ENCODE measurements at regions of chr9 and their contacts with region 1.

Region 1: GRCh38 chr9:15211160-15211814 is 95.7 kb downstream of the TTC39B start:
- DNase-seq: peak; percentile 58
- H3K4me3 Mint-ChIP-seq: no peak overlapping the region
- H3K27ac Mint-ChIP-seq: no peak overlapping the region
- H3K4me1 Mint-ChIP-seq: peaks cover 8% of the 10 kb centered on the region
- H3K27me3 Mint-ChIP-seq: no peaks in the 10 kb centered on the region

Region 2: GRCh38 chr9:14652729-14653377 is 558.4 kb before region 1 on chr9:
- CTCF ChIA-PET with region 1: no interaction called
- POLR2A ChIA-PET with region 1: no interaction called
- intact Hi-C with region 1: no loop called
- DNase-seq: no peak
- H3K4me3 Mint-ChIP-seq: no peak overlapping the region
- H3K27ac Mint-ChIP-seq: no peak overlapping the region
- H3K4me1 Mint-ChIP-seq: no peaks in the 10 kb centered on the region
- H3K27me3 Mint-ChIP-seq: no peaks in the 10 kb centered on the region

Region 3: GRCh38 chr9:15306757-15307534 is 95.7 kb after region 1 on chr9 and contains the start of gene TTC39B:
- CTCF ChIA-PET with region 1: interaction called, 12 read pairs
- POLR2A ChIA-PET with region 1: interaction called, 3 read pairs
- intact Hi-C with region 1: loop called (anchors 1 kb)
- DNase-seq: peak; percentile 89
- H3K4me3 Mint-ChIP-seq: peak within 1 kb of the TSS; percentile 99
- H3K27ac Mint-ChIP-seq: peak within 1 kb of the TSS; percentile 96
- H3K4me1 Mint-ChIP-seq: peaks cover 48% of the 10 kb centered on the region
- H3K27me3 Mint-ChIP-seq: no peaks in the 10 kb centered on the region
- total RNA-seq, gene TTC39B: 30.3 to 31.7 TPM

Region 4: GRCh38 chr9:15357050-15357653 is 145.9 kb after region 1 on chr9:
- CTCF ChIA-PET with region 1: no interaction called
- POLR2A ChIA-PET with region 1: no interaction called
- intact Hi-C with region 1: loop called (anchors 5 kb)
- DNase-seq: peak; percentile 16
- H3K4me3 Mint-ChIP-seq: no peak overlapping the region
- H3K27ac Mint-ChIP-seq: no peak overlapping the region
- H3K4me1 Mint-ChIP-seq: peaks cover 8% of the 10 kb centered on the region
- H3K27me3 Mint-ChIP-seq: no peaks in the 10 kb centered on the region

Region 5: GRCh38 chr9:15416880-15417279 is 205.6 kb after region 1 on chr9:
- CTCF ChIA-PET with region 1: interaction called, 20 read pairs
- POLR2A ChIA-PET with region 1: no interaction called
- intact Hi-C with region 1: loop called (anchors 1 kb)
- DNase-seq: peak; percentile 48
- H3K4me3 Mint-ChIP-seq: no peak overlapping the region
- H3K27ac Mint-ChIP-seq: no peak overlapping the region
- H3K4me1 Mint-ChIP-seq: no peaks in the 10 kb centered on the region
- H3K27me3 Mint-ChIP-seq: no peaks in the 10 kb centered on the region

Region 6: DNA sequence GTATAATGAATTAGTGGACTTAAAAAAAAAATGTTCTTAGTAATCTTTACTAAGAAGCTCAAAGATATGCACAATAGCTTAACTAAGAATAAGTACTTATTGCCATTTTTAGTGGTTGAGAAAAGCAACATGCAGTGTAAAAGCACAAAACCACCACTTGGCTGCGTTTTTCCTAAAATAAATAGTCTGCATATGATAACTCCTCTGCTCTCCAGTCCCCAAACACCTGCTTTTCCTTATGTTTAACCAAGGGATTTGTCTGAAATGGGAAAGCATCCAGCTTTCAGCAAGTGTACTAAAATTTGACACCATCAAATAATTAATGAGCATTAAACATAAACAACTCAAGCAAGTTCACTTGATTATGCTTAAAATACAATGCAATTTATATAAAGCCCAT is 258.1 kb after region 1 on chr9:
- CTCF ChIA-PET with region 1: no interaction called
- POLR2A ChIA-PET with region 1: no interaction called
- intact Hi-C with region 1: no loop called
- DNase-seq: no peak
- H3K4me3 Mint-ChIP-seq: no peak overlapping the region
- H3K27ac Mint-ChIP-seq: no peak overlapping the region
- H3K4me1 Mint-ChIP-seq: peaks cover 17% of the 10 kb centered on the region
- H3K27me3 Mint-ChIP-seq: no peaks in the 10 kb centered on the region

Region 7: GRCh38 chr9:15529566-15530324 is 318.5 kb after region 1 on chr9:
- CTCF ChIA-PET with region 1: interaction called, 4 read pairs
- POLR2A ChIA-PET with region 1: no interaction called
- intact Hi-C with region 1: loop called (anchors 1 kb)
- DNase-seq: no peak
- H3K4me3 Mint-ChIP-seq: no peak overlapping the region
- H3K27ac Mint-ChIP-seq: no peak overlapping the region
- H3K4me1 Mint-ChIP-seq: peaks cover 9% of the 10 kb centered on the region
- H3K27me3 Mint-ChIP-seq: no peaks in the 10 kb centered on the region

Measured in activated CD4-positive, alpha-beta memory T cell treated with anti-CD3 and anti-CD28 coated beads for 36 hours (primary cell).